Activated CD4-positive, alpha-beta T cell treated with anti-CD3 and anti-CD28 coated beads for 36 hours (primary cell): ENCODE measurements at regions of chr5 and their contacts with region 1.

Region 1: GRCh38 chr5:74919487-74919886 is 53.3 kb upstream of the FAM169A start:
- DNase-seq: peak; percentile 20
- ATAC-seq: no peak
- H3K4me3 Mint-ChIP-seq: no peak overlapping the region
- H3K27ac Mint-ChIP-seq: no peak overlapping the region
- H3K4me1 Mint-ChIP-seq: no peaks in the 10 kb centered on the region
- H3K27me3 Mint-ChIP-seq: peaks cover 7% of the 10 kb centered on the region

Region 2: GRCh38 chr5:73902327-73903051 is 1017.0 kb before region 1 on chr5:
- CTCF ChIA-PET with region 1: no interaction called
- POLR2A ChIA-PET with region 1: no interaction called
- intact Hi-C with region 1: loop called (anchors 1 to 10 kb)
- DNase-seq: no peak
- ATAC-seq: no peak
- H3K4me3 Mint-ChIP-seq: no peak overlapping the region
- H3K27ac Mint-ChIP-seq: no peak overlapping the region
- H3K4me1 Mint-ChIP-seq: peaks cover 7% of the 10 kb centered on the region
- H3K27me3 Mint-ChIP-seq: peaks cover 18% of the 10 kb centered on the region

Region 3: DNA sequence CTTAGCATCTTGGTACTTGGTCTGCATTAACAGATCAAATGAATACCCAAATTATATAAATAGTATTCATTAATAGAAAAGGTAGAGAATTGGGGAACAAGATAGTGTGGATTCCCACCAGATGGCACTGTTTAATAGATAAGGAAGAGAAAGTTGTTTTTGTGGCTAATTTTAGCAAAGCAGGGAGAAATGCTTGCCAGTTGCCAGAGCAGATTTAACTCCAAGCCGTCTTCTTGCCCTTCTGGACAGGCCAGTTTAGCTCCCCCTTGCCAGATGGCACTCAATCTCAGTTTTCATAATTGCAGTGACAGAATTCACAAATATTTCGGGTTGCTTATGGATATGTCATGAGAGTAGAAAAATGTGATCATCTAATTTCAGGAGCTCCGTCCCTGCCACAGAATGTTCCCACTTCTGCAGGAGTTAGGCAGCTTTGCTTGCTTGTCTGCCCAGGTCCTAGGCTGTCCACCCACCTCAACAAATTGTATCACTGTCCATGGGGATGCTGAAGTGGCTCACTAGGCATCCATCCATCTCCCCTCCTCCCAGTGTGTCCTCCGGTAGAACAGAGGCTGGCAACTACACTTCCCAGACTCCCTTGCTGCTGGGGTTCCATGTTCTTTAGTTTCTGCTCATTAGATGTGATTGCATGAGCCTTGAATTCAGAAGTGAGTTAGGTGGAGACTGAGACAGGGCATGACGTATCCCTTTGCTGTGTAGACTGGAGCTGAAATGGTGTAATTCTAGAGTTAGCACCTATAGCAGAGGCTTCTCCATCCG is 246.3 kb before region 1 on chr5:
- CTCF ChIA-PET with region 1: interaction called, 4 read pairs
- POLR2A ChIA-PET with region 1: no interaction called
- intact Hi-C with region 1: loop called (anchors 1 kb)
- DNase-seq: no peak
- ATAC-seq: no peak
- H3K4me3 Mint-ChIP-seq: no peak overlapping the region
- H3K27ac Mint-ChIP-seq: no peak overlapping the region
- H3K4me1 Mint-ChIP-seq: no peaks in the 10 kb centered on the region
- H3K27me3 Mint-ChIP-seq: peaks cover 12% of the 10 kb centered on the region